ENCODE measurements at regions of chr1 and their contacts with region 1.

Region 1: GRCh38 chr1:44652445-44653106 is 21.7 kb downstream of the TMEM53 start:
- DNase-seq: peak; percentile 76
- H3K4me3 ChIP-seq: no peak overlapping the region
- H3K27ac ChIP-seq: peak overlapping the region; percentile 14
- H3K4me1 ChIP-seq: no peaks in the 10 kb centered on the region
- CTCF ChIP-seq: peak; percentile 93

Region 2: DNA sequence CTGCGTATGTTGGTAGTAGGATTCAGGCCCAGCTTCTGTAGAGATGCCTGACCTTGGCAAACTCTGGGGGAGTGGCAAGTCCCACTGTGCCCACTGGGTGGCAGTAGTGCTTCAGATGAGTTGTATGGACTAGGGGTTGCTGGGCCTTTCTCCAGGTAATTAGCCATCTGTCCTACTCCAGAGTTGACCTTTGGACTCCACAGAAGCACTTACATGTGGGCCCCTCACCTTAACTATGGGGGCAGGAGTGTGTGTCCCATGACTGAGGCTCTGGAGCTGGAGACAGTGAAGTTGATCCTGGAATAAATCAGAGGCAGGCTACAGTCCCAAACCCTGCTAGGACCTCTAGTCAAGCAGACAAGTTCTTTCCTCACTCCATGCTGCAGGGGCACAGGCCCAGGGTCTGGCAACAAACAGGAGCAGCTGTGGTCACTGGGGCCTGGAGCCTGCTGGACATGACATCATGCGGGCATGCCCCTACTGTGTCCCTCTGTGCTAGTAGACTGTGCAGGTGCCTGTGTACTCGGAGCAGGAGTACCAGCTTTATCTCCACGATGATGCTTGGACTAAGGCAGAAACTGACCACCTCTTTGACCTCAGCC is 434.7 kb before region 1 on chr1:
- CTCF ChIA-PET with region 1: no interaction called
- POLR2A ChIA-PET with region 1: no interaction called
- intact Hi-C with region 1: loop called (anchors 2 kb)
- DNase-seq: peak; percentile 74
- H3K4me3 ChIP-seq: no peak overlapping the region
- H3K27ac ChIP-seq: no peak overlapping the region
- H3K4me1 ChIP-seq: peaks cover 30% of the 10 kb centered on the region
- CTCF ChIP-seq: peak; percentile 91

Region 3: GRCh38 chr1:44377925-44378784 is 274.4 kb before region 1 on chr1:
- CTCF ChIA-PET with region 1: no interaction called
- POLR2A ChIA-PET with region 1: no interaction called
- intact Hi-C with region 1: loop called (anchors 10 kb)
- DNase-seq: peak; percentile 56
- H3K4me3 ChIP-seq: no peak overlapping the region
- H3K27ac ChIP-seq: no peak overlapping the region
- H3K4me1 ChIP-seq: no peaks in the 10 kb centered on the region
- CTCF ChIP-seq: peak; percentile 82

Region 4: GRCh38 chr1:44571712-44572571 is 80.6 kb before region 1 on chr1:
- CTCF ChIA-PET with region 1: no interaction called
- POLR2A ChIA-PET with region 1: no interaction called
- intact Hi-C with region 1: loop called (anchors 2 kb)
- DNase-seq: peak; percentile 47
- H3K4me3 ChIP-seq: no peak overlapping the region
- H3K27ac ChIP-seq: no peak overlapping the region
- H3K4me1 ChIP-seq: no peaks in the 10 kb centered on the region
- CTCF ChIP-seq: peak; percentile 86

Region 5: GRCh38 chr1:44609412-44609767 is 43.2 kb before region 1 on chr1:
- CTCF ChIA-PET with region 1: interaction called, 3 read pairs
- POLR2A ChIA-PET with region 1: interaction called, 4 read pairs
- intact Hi-C with region 1: loop called (anchors 1 kb)
- DNase-seq: peak; percentile 47
- H3K4me3 ChIP-seq: no peak overlapping the region
- H3K27ac ChIP-seq: no peak overlapping the region
- H3K4me1 ChIP-seq: no peaks in the 10 kb centered on the region
- CTCF ChIP-seq: peak; percentile 70

Region 6: GRCh38 chr1:44714944-44715571 is 62.5 kb after region 1 on chr1:
- CTCF ChIA-PET with region 1: no interaction called
- POLR2A ChIA-PET with region 1: no interaction called
- intact Hi-C with region 1: loop called (anchors 1 kb)
- DNase-seq: peak; percentile 92
- H3K4me3 ChIP-seq: peak overlapping the region; percentile 21
- H3K27ac ChIP-seq: peak overlapping the region; percentile 96
- H3K4me1 ChIP-seq: peaks cover 80% of the 10 kb centered on the region
- CTCF ChIP-seq: peak; percentile 97

Measured in OCI-LY7 (cell line).